ENCODE measurements at regions of chr19 and their contacts with region 1.

Region 1: DNA sequence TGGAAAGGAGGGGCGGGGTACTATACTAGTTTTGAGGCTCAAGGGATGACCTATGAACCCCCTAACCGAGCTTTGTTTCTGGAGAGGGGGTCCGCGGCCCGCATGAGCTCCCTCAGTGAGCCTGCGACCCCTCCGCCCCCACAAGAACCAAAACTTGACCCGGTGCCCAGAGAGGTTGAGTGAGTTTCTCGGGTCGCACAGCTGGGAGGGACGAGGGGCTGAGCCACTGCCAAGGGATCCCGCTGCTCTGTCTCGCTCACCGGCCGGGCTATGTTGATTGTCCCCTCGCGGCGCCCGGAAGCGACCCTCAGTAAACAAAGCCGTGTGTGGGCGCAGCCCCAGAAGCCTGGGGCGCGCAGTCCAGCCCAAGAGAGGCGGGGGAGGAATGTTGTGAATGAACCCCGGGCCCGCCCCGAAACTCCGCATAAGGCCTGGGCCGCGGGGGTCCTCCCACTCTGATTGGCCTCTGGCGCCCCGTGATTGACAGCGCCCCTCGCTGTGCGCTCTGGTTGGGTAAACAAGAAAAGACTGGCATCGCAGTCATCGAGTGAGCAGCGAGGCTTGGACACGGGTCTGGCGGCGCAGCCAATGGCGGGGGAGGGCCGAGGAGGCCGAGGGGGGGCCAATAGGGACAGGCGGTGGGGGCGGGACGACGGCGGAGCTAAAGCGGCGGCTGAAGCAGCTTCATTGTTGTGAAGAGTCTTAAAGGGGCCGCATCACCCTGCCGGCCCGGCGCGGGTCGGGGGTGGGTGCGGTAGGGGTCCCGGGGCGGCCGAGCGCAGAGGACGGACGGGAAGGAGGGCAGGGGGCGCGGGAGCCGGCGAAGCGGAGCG is at the start of gene ZSWIM4:
- DNase-seq: peak; percentile 99 to 100 (median 100)
- ATAC-seq: peak; percentile 96 to 99 (median 98)
- H3K4me3 ChIP-seq: peak within 1 kb of the TSS; percentile 55 to 92 (median 80)
- H3K27ac ChIP-seq: peak within 1 kb of the TSS; percentile 78 to 95 (median 90)
- H3K4me1 ChIP-seq: peaks cover 0 to 38% (median 21%) of the 10 kb centered on the region in 12 donors
- H3K27me3 ChIP-seq: no peaks in the 10 kb centered on the region
- CTCF ChIP-seq: peak in 1 of 12 donors; percentile 11
- POLR2A ChIP-seq: peak in 1 of 2 donors; percentile 48
- total RNA-seq, gene ZSWIM4: 2.0 to 10.9 (median 3.4) TPM

Region 2: GRCh38 chr19:13463296-13463695 is 331.7 kb before region 1 on chr19:
- intact Hi-C with region 1: no loop called
- DNase-seq: no peak
- ATAC-seq: no peak
- H3K4me3 ChIP-seq: no peak overlapping the region
- H3K27ac ChIP-seq: no peak overlapping the region
- H3K4me1 ChIP-seq: no peaks in the 10 kb centered on the region
- H3K27me3 ChIP-seq: peaks cover 0 to 10% (median 0%) of the 10 kb centered on the region in 9 donors
- CTCF ChIP-seq: no peak
- POLR2A ChIP-seq: no peak

Region 3: GRCh38 chr19:13825489-13826391 is 30.8 kb after region 1 on chr19:
- intact Hi-C with region 1: loop called in 5 of 10 experiments (anchors 5 kb)
- DNase-seq: no peak
- ATAC-seq: no peak
- H3K4me3 ChIP-seq: no peak overlapping the region
- H3K27ac ChIP-seq: no peak overlapping the region
- H3K4me1 ChIP-seq: peaks cover 0 to 16% (median 5%) of the 10 kb centered on the region in 12 donors
- H3K27me3 ChIP-seq: no peaks in the 10 kb centered on the region
- CTCF ChIP-seq: no peak
- POLR2A ChIP-seq: no peak

Region 4: GRCh38 chr19:13833330-13834243 is 38.6 kb after region 1 on chr19:
- intact Hi-C with region 1: loop called in 7 of 10 experiments (anchors 5 kb)
- DNase-seq: peak; percentile 94 to 97 (median 97)
- ATAC-seq: peak; percentile 83 to 88 (median 84)
- H3K4me3 ChIP-seq: peak overlapping the region in 7 of 12 donors; percentile 3 to 43 (median 24)
- H3K27ac ChIP-seq: peak overlapping the region; percentile 54 to 100 (median 88)
- H3K4me1 ChIP-seq: peaks cover 25 to 65% (median 58%) of the 10 kb centered on the region in 12 donors
- H3K27me3 ChIP-seq: no peaks in the 10 kb centered on the region
- CTCF ChIP-seq: peak in 11 of 12 donors; percentile 9 to 57 (median 44)
- POLR2A ChIP-seq: peak in 1 of 2 donors; percentile 63

Region 5: DNA sequence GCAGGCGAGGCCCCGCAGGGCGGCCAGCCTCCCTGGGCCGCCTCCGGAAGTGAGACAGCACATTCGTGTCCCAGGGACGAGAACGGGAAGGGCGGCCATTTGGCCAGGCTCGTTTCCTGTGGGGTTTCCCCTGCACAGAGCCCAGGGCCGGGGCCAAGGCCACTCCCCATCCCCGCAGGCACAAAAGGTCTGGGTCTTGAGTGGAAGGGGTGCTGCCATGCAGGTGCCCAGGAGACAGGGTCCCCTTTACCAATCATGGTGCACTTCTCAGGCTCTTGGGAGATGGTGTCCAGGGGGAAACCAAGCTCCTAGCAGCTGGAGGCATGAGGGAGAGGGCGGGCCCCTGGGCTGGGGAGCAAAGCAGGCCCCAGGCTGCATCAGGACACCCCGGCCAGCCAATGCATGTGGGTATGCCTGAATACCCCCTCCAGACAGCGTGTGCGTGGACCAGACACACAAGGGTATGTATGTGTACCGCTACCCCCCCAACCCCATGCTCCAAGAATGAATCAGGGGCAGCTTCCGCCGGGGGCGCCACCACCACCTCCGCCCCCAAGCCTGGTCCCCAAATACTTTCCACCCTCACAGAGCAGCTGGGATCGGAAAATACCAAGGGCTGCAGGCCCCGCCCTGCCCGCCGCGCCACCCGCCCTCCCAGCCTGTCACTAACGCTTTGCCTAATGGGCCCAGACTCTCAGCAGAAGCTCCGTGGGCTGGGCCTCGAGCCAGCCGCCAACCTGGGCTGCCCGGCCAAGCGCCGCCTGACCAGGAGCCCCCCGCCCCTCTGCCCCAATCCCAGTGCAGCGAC is 44.4 kb after region 1 on chr19:
- intact Hi-C with region 1: loop called in 6 of 10 experiments (anchors 5 kb)
- DNase-seq: peak; percentile 93 to 97 (median 96)
- ATAC-seq: peak; percentile 58 to 77 (median 72)
- H3K4me3 ChIP-seq: peak overlapping the region; percentile 72 to 99 (median 96)
- H3K27ac ChIP-seq: peak overlapping the region; percentile 99 to 100 (median 100)
- H3K4me1 ChIP-seq: peaks cover 27 to 75% (median 56%) of the 10 kb centered on the region in 12 donors
- H3K27me3 ChIP-seq: no peaks in the 10 kb centered on the region
- CTCF ChIP-seq: peak in 3 of 12 donors; percentile 8 to 16 (median 8)
- POLR2A ChIP-seq: peak; percentile 32 to 42

Region 6: DNA sequence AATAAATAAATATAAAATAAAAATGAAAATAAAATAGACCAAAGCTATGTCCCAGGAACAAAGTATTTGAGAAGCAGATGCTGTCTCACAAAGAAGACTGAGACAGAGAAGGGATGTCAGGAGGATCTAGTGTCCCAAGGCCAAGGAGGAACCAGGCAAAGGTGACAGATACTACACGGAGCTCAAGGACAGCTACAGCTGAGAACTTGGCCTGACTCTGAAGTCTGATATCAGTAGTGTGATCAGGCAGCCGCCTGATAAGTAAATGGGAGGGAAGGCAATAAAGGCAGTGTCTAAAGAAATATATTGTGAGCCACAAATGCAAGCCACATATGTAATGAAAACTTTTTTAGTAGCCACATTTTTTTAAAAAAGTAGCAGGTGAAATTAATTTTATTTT is 61.5 kb after region 1 on chr19:
- intact Hi-C with region 1: loop called in 2 of 10 experiments (anchors 2 to 5 kb)
- DNase-seq: no peak
- ATAC-seq: no peak
- H3K4me3 ChIP-seq: no peak overlapping the region
- H3K27ac ChIP-seq: no peak overlapping the region
- H3K4me1 ChIP-seq: peaks cover 0 to 16% (median 11%) of the 10 kb centered on the region in 12 donors
- H3K27me3 ChIP-seq: no peaks in the 10 kb centered on the region
- CTCF ChIP-seq: no peak
- POLR2A ChIP-seq: no peak